ENCODE measurements at regions of chr3 and their contacts with region 1.

Region 1: GRCh38 chr3:87173776-87174175 is 53.3 kb upstream of the CHMP2B start:
- DNase-seq: no peak
- H3K4me3 ChIP-seq: no peak overlapping the region
- H3K27ac ChIP-seq: no peak overlapping the region
- H3K4me1 ChIP-seq: no peaks in the 10 kb centered on the region
- H3K27me3 ChIP-seq: no peaks in the 10 kb centered on the region
- CTCF ChIP-seq: no peak

Region 2: GRCh38 chr3:86748015-86748414 is 425.8 kb before region 1 on chr3:
- intact Hi-C with region 1: loop called (anchors 10 kb)
- DNase-seq: no peak
- H3K4me3 ChIP-seq: no peak overlapping the region
- H3K27ac ChIP-seq: no peak overlapping the region
- H3K4me1 ChIP-seq: no peaks in the 10 kb centered on the region
- H3K27me3 ChIP-seq: no peaks in the 10 kb centered on the region
- CTCF ChIP-seq: no peak

Region 3: DNA sequence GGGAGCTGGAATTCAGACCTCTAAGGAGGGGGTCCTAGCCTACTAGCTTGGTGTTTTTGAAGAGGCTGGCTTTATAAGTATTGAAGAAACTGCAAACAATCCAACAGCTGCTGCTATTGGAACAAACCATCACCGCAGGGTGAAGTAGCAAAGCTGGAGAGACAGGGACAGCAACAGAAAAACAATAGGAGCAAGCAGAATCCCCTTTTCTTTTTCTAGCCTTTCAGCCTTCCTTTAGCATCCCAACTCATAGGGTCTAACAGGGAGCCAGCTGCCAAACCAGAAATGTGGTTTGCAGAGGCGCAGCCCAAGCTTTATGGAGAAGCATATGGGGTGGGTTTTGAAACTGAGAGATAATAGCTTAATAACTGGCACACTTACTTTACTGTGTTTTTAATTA is 52.9 kb before region 1 on chr3:
- intact Hi-C with region 1: no loop called
- DNase-seq: peak in 1 of 5 donors; percentile 34
- H3K4me3 ChIP-seq: no peak overlapping the region
- H3K27ac ChIP-seq: no peak overlapping the region
- H3K4me1 ChIP-seq: no peaks in the 10 kb centered on the region
- H3K27me3 ChIP-seq: no peaks in the 10 kb centered on the region
- CTCF ChIP-seq: no peak

Measured in kidney (tissue), 22 donors.